Mammary epithelial cell (primary cell): ENCODE measurements at regions of chr5 and their contacts with region 1.

Region 1: GRCh38 chr5:40972434-40972833 is 63.1 kb downstream of the C7 start:
- DNase-seq: no peak
- H3K4me3 ChIP-seq: no peak overlapping the region
- H3K27ac ChIP-seq: no peak overlapping the region
- H3K4me1 ChIP-seq: no peaks in the 10 kb centered on the region
- H3K27me3 ChIP-seq: no peaks in the 10 kb centered on the region
- CTCF ChIP-seq: no peak

Region 2: GRCh38 chr5:41559184-41559583 is 586.8 kb after region 1 on chr5:
- CTCF ChIA-PET with region 1: no interaction called
- dilution Hi-C with region 1: no loop called
- in situ Hi-C with region 1: no loop called
- intact Hi-C with region 1: no loop called
- DNase-seq: no peak
- H3K4me3 ChIP-seq: no peak overlapping the region
- H3K27ac ChIP-seq: no peak overlapping the region
- H3K4me1 ChIP-seq: no peaks in the 10 kb centered on the region
- H3K27me3 ChIP-seq: no peaks in the 10 kb centered on the region
- CTCF ChIP-seq: no peak

Region 3: DNA sequence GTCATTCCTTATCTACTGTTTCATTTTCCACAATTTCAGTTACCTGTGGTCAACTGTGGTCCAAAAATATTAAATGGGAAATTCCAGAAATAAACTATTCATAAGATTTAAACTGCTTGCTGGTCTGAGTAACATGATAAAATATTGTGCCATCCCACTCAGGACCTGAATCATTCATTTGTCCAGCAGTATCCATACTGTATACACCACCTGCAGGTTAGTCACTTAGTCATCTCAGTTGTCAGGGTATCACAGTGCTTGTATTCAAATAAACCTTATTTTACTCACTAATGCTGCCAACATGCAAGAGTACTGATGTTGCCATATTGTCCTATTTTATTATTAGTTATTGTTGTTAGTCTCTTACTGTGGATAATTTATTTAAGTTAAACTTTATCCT is 1092.4 kb after region 1 on chr5:
- CTCF ChIA-PET with region 1: interaction called, 18 read pairs
- dilution Hi-C with region 1: no loop called
- in situ Hi-C with region 1: no loop called
- intact Hi-C with region 1: no loop called
- DNase-seq: peak; percentile 96
- H3K4me3 ChIP-seq: no peak overlapping the region
- H3K27ac ChIP-seq: peak overlapping the region; percentile 62
- H3K4me1 ChIP-seq: peaks cover 7% of the 10 kb centered on the region
- H3K27me3 ChIP-seq: no peaks in the 10 kb centered on the region
- CTCF ChIP-seq: no peak